H1 (cell line): ENCODE measurements at regions of chr1 and their contacts with region 1.

Region 1: DNA sequence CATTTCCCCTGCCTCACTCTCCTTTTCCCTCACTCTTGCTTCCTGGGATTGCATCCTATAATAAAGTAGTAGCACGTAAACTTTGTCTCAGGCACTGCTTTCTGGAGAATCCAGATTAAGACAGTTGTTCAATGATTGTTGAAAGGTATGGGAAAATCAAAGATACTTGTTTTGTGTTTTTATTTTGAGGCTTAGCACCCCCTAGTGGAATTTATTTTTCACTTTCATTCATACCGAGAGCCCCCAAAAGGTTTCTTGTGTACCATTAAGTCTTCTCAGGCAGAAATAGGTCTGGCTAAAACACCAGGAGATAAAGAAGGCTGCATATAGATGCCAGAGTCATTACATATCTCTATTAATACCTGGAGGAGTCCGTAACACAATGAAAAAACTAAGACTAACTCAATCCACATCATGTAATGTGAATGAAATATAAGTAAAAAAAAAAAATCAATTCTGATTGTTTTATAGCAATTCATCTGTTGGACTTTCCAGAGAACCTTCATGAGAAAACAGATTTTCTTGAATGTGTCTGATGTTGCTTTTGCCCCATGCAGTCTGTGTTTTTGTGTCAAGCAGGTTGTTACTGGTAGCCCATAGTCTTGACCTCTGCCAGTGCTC is 103.5 kb downstream of the RPE65 start:
- DNase-seq: no peak
- H3K4me3 ChIP-seq: no peak overlapping the region
- H3K27ac ChIP-seq: no peak overlapping the region
- H3K4me1 ChIP-seq: no peaks in the 10 kb centered on the region
- H3K27me3 ChIP-seq: no peaks in the 10 kb centered on the region
- CTCF ChIP-seq: peak in 2 of 3 experiments; percentile 20 to 21; a peak in 2 of 4 replicates
- EP300 ChIP-seq: no peak
- POLR2A ChIP-seq: no peak
- RAD21 ChIP-seq: peak; percentile 37 to 40

Region 2: GRCh38 chr1:68162761-68163160 is 183.5 kb before region 1 on chr1:
- CTCF ChIA-PET with region 1: interaction called, 20 read pairs
- POLR2A ChIA-PET with region 1: no interaction called
- DNase-seq: peak in 1 of 2 experiments; percentile 76
- H3K4me3 ChIP-seq: no peak overlapping the region
- H3K27ac ChIP-seq: no peak overlapping the region
- H3K4me1 ChIP-seq: no peaks in the 10 kb centered on the region
- H3K27me3 ChIP-seq: no peaks in the 10 kb centered on the region
- CTCF ChIP-seq: peak; percentile 56 to 76 (median 70)
- EP300 ChIP-seq: no peak
- POLR2A ChIP-seq: no peak
- RAD21 ChIP-seq: peak; percentile 59 to 68

Region 3: DNA sequence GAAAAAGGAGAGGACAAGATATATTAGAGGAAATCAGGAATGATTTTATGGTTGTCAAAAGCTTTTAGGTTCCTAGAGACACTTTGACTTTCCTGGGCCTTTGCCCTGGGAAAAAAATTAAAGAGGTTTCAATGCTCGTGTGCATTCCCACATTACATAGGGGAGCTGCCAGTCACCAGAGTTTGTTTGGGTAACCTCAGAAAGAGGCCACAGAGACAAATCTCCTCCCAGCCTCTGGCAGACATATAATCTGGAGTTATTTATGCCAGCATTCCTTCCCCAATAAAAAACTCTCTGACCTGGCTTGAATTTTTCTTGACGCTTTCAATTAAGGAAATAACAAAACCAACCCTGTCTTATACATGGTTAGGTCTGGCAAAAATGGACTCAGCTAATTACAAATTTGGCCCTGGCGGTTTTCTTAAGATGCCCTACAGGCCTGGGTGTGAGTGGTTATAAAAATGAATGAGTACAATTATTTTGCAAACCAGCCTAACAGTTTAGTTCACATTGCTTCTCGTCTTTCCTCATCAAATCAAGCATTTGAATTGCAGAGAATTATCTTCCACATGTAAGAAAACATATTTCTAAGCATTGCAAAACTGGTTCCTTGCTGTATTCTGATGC is 177.6 kb before region 1 on chr1:
- CTCF ChIA-PET with region 1: interaction called, 20 read pairs
- POLR2A ChIA-PET with region 1: no interaction called
- DNase-seq: no peak
- H3K4me3 ChIP-seq: no peak overlapping the region
- H3K27ac ChIP-seq: no peak overlapping the region
- H3K4me1 ChIP-seq: no peaks in the 10 kb centered on the region
- H3K27me3 ChIP-seq: no peaks in the 10 kb centered on the region
- CTCF ChIP-seq: no peak
- EP300 ChIP-seq: no peak
- POLR2A ChIP-seq: no peak
- RAD21 ChIP-seq: no peak

Region 4: GRCh38 chr1:68331117-68331865 is 15.0 kb before region 1 on chr1:
- CTCF ChIA-PET with region 1: interaction called, 64 read pairs
- POLR2A ChIA-PET with region 1: no interaction called
- DNase-seq: no peak
- H3K4me3 ChIP-seq: no peak overlapping the region
- H3K27ac ChIP-seq: no peak overlapping the region
- H3K4me1 ChIP-seq: no peaks in the 10 kb centered on the region
- H3K27me3 ChIP-seq: no peaks in the 10 kb centered on the region
- CTCF ChIP-seq: no peak
- EP300 ChIP-seq: no peak
- POLR2A ChIP-seq: no peak
- RAD21 ChIP-seq: no peak

Region 5: GRCh38 chr1:68358439-68358838 is 12.1 kb after region 1 on chr1:
- CTCF ChIA-PET with region 1: interaction called, 15 read pairs
- POLR2A ChIA-PET with region 1: no interaction called
- DNase-seq: no peak
- H3K4me3 ChIP-seq: no peak overlapping the region
- H3K27ac ChIP-seq: no peak overlapping the region
- H3K4me1 ChIP-seq: no peaks in the 10 kb centered on the region
- H3K27me3 ChIP-seq: no peaks in the 10 kb centered on the region
- CTCF ChIP-seq: no peak
- EP300 ChIP-seq: no peak
- POLR2A ChIP-seq: no peak
- RAD21 ChIP-seq: no peak

Region 6: DNA sequence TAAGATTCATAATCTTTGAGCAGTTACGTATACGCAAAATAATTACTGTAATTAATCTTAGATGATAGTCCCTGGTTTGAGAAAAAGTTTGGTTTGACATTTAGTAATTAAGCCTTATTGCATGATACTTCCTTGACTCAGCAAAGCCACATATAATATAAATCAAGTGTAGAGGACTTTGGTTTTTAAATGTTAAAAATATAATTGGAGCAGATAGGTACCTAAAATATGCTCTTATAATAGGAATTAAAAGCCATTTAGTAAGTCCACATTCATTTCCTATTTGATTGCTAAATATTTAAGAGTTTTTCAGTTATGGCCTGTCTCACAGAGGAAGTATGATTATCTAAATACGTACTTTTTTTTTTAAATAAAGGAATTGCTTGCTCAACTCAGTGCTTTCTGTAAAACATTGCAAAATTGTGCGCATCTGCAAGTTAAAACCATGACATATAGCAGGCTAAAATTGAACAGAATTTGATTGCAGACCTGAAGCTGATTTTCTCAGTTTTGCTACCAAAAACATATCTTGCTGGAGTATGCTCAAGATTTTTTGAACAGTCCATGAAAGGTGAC is 83.0 kb after region 1 on chr1:
- CTCF ChIA-PET with region 1: no interaction called
- POLR2A ChIA-PET with region 1: no interaction called
- DNase-seq: no peak
- H3K4me3 ChIP-seq: no peak overlapping the region
- H3K27ac ChIP-seq: no peak overlapping the region
- H3K4me1 ChIP-seq: no peaks in the 10 kb centered on the region
- H3K27me3 ChIP-seq: no peaks in the 10 kb centered on the region
- CTCF ChIP-seq: no peak
- EP300 ChIP-seq: no peak
- POLR2A ChIP-seq: no peak
- RAD21 ChIP-seq: no peak

Region 7: GRCh38 chr1:69088571-69088970 is 742.3 kb after region 1 on chr1:
- CTCF ChIA-PET with region 1: no interaction called
- POLR2A ChIA-PET with region 1: no interaction called
- DNase-seq: no peak
- H3K4me3 ChIP-seq: no peak overlapping the region
- H3K27ac ChIP-seq: no peak overlapping the region
- H3K4me1 ChIP-seq: peaks cover 0 to 8% (median 6%) of the 10 kb centered on the region in 4 experiments; a peak in 2 of 7 replicates
- H3K27me3 ChIP-seq: no peaks in the 10 kb centered on the region
- CTCF ChIP-seq: no peak
- EP300 ChIP-seq: no peak
- POLR2A ChIP-seq: no peak
- RAD21 ChIP-seq: no peak